Right ventricle myocardium inferior (tissue), 1 donor: ENCODE measurements at regions of chr2 and their contacts with region 1.

Region 1: GRCh38 chr2:130797493-130798435 is 39.0 kb upstream of the ARHGEF4 start:
- DNase-seq: peak; percentile 96
- ATAC-seq: peak; percentile 98

Region 2: GRCh38 chr2:130873700-130874346 is 76.1 kb after region 1 on chr2:
- intact Hi-C with region 1: loop called (anchors 1 kb)
- DNase-seq: no peak
- ATAC-seq: peak; percentile 58

Region 3: GRCh38 chr2:130920415-130921163 is 122.8 kb after region 1 on chr2:
- intact Hi-C with region 1: loop called (anchors 1 kb)
- DNase-seq: no peak
- ATAC-seq: peak; percentile 46